ENCODE measurements at regions of chr5 and their contacts with region 1.

Region 1: GRCh38 chr5:88140856-88141752 is 127.5 kb downstream of the TMEM161B start:
- DNase-seq: peak; percentile 97 to 98
- H3K4me3 ChIP-seq: peak overlapping the region; percentile 52
- H3K4me3 Mint-ChIP-seq: no peak overlapping the region
- H3K27ac Mint-ChIP-seq: no peak overlapping the region
- H3K4me1 ChIP-seq: no peaks in the 10 kb centered on the region; the same call in 1 of the 2 replicates
- H3K4me1 Mint-ChIP-seq: no peaks in the 10 kb centered on the region
- H3K27me3 ChIP-seq: no peaks in the 10 kb centered on the region
- H3K27me3 Mint-ChIP-seq: peaks cover 2% of the 10 kb centered on the region
- CTCF ChIP-seq: peak; percentile 69 to 84

Region 2: GRCh38 chr5:87916320-87916719 is 224.8 kb before region 1 on chr5:
- CTCF ChIA-PET with region 1: no interaction called
- POLR2A ChIA-PET with region 1: no interaction called
- intact Hi-C with region 1: no loop called
- DNase-seq: no peak
- H3K4me3 ChIP-seq: no peak overlapping the region
- H3K4me3 Mint-ChIP-seq: no peak overlapping the region
- H3K27ac Mint-ChIP-seq: no peak overlapping the region
- H3K4me1 ChIP-seq: no peaks in the 10 kb centered on the region
- H3K4me1 Mint-ChIP-seq: no peaks in the 10 kb centered on the region
- H3K27me3 ChIP-seq: no peaks in the 10 kb centered on the region
- H3K27me3 Mint-ChIP-seq: no peaks in the 10 kb centered on the region
- CTCF ChIP-seq: no peak

Region 3: DNA sequence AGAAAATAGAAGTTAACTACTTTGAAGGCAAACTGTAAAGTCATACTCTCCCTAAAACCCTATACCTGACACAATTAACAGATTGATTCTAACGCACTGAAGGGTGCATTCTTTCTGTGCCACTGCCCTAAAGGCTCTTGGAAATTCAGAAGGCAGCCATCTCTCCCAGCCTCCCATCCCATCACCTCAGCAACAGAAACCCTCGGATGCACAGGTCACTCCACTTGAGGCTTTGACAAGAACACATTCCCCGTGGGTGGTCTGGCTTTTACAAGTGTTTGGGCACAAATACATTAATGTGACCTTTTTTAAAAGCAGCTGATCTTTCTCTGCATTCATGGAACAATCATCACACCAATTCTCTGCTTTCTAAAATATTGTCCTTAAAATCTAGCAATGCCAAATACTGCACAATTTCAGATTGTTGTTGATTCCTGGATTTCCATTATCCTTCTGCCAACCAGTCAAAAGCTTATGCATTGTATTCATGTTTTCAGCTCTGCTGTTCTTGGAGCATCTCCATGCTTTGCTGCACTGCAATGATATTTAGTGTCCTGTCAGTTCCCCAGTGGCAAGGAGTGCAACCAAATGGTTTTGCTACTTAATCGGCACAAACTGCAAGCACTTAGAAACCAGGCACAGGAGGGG is 48.0 kb before region 1 on chr5:
- CTCF ChIA-PET with region 1: interaction called, 4 read pairs
- POLR2A ChIA-PET with region 1: no interaction called
- intact Hi-C with region 1: loop called (anchors 1 kb)
- DNase-seq: no peak
- H3K4me3 ChIP-seq: no peak overlapping the region
- H3K4me3 Mint-ChIP-seq: no peak overlapping the region
- H3K27ac Mint-ChIP-seq: no peak overlapping the region
- H3K4me1 ChIP-seq: peaks cover 7% of the 10 kb centered on the region; the same call in 1 of the 2 replicates
- H3K4me1 Mint-ChIP-seq: no peaks in the 10 kb centered on the region
- H3K27me3 ChIP-seq: no peaks in the 10 kb centered on the region
- H3K27me3 Mint-ChIP-seq: peaks cover 5% of the 10 kb centered on the region
- CTCF ChIP-seq: no peak

Region 4: GRCh38 chr5:88172847-88173758 is 32.0 kb after region 1 on chr5:
- CTCF ChIA-PET with region 1: no interaction called
- POLR2A ChIA-PET with region 1: no interaction called
- intact Hi-C with region 1: no loop called
- DNase-seq: peak in 1 of 2 experiments; percentile 30
- H3K4me3 ChIP-seq: no peak overlapping the region
- H3K4me3 Mint-ChIP-seq: no peak overlapping the region
- H3K27ac Mint-ChIP-seq: no peak overlapping the region
- H3K4me1 ChIP-seq: no peaks in the 10 kb centered on the region
- H3K4me1 Mint-ChIP-seq: no peaks in the 10 kb centered on the region
- H3K27me3 ChIP-seq: no peaks in the 10 kb centered on the region
- H3K27me3 Mint-ChIP-seq: peaks cover 5% of the 10 kb centered on the region
- CTCF ChIP-seq: no peak

Region 5: DNA sequence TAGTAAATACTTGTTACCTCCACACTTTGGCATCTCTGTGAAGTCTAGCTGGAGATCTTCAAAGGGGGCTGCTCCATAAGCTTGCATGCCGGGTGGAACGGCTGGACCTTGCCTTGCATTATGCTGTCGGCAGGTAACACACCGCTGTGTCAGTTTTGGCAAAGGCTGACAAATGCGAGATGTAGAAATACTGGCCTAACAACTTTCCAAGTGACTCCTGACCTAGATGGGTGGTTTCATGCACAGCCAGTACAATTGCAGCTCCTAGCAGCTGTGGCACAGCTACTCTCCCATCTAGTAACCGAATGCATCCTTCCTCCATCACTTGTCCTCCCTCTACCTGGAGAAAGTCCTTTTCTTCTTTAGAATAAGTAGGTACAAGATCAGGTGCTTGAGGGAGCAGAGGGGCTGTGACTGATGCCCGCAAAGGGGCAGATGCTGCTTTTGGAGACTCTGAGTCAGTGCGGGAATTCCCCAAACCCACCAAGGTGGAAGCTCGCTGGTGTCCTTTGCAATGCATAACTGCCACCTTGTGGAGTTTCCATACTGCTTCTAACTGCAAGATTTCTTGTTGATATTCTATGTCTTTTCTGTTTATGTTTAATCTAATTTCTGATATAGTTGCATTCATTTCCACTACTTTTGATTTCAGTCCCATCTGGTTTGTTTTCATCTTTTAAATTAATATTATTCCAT is 49.2 kb after region 1 on chr5:
- CTCF ChIA-PET with region 1: interaction called, 4 read pairs
- POLR2A ChIA-PET with region 1: no interaction called
- intact Hi-C with region 1: loop called (anchors 5 kb)
- DNase-seq: peak in 1 of 2 experiments; percentile 29
- H3K4me3 ChIP-seq: no peak overlapping the region
- H3K4me3 Mint-ChIP-seq: no peak overlapping the region
- H3K27ac Mint-ChIP-seq: no peak overlapping the region
- H3K4me1 ChIP-seq: no peaks in the 10 kb centered on the region
- H3K4me1 Mint-ChIP-seq: no peaks in the 10 kb centered on the region
- H3K27me3 ChIP-seq: no peaks in the 10 kb centered on the region
- H3K27me3 Mint-ChIP-seq: no peaks in the 10 kb centered on the region
- CTCF ChIP-seq: no peak

Region 6: GRCh38 chr5:88236866-88237642 is 96.0 kb after region 1 on chr5:
- CTCF ChIA-PET with region 1: no interaction called
- POLR2A ChIA-PET with region 1: no interaction called
- intact Hi-C with region 1: no loop called
- DNase-seq: no peak
- H3K4me3 ChIP-seq: no peak overlapping the region
- H3K4me3 Mint-ChIP-seq: no peak overlapping the region
- H3K27ac Mint-ChIP-seq: no peak overlapping the region
- H3K4me1 ChIP-seq: no peaks in the 10 kb centered on the region
- H3K4me1 Mint-ChIP-seq: no peaks in the 10 kb centered on the region
- H3K27me3 ChIP-seq: no peaks in the 10 kb centered on the region
- H3K27me3 Mint-ChIP-seq: no peaks in the 10 kb centered on the region
- CTCF ChIP-seq: no peak

Region 7: DNA sequence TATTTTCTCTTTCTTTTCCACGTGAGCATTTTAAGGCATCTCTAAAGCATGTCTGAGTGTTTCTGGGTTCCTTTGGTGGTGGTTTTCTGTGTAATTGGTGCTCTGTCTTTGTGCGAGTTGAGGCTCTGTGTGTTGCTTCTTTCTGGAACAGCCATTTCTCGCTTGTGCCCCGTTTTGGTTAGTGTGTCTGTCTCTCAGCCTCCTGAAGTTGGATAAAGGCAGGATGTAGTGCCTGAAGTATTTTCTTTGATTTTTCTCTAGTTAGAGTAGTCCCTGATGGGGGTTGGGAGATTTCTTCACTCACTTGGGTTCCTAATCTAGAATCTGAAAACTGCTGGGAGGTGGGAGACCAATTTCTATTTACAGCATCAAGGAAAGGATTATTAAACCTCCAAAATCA is 257.2 kb after region 1 on chr5:
- CTCF ChIA-PET with region 1: no interaction called
- POLR2A ChIA-PET with region 1: no interaction called
- intact Hi-C with region 1: loop called (anchors 5 kb)
- DNase-seq: no peak
- H3K4me3 ChIP-seq: no peak overlapping the region
- H3K4me3 Mint-ChIP-seq: no peak overlapping the region
- H3K27ac Mint-ChIP-seq: no peak overlapping the region
- H3K4me1 ChIP-seq: no peaks in the 10 kb centered on the region
- H3K4me1 Mint-ChIP-seq: no peaks in the 10 kb centered on the region
- H3K27me3 ChIP-seq: no peaks in the 10 kb centered on the region; the same call in none of the 2 replicates
- H3K27me3 Mint-ChIP-seq: peaks cover 37% of the 10 kb centered on the region
- CTCF ChIP-seq: no peak

Region 8: GRCh38 chr5:88515876-88516819 is 375.0 kb after region 1 on chr5:
- CTCF ChIA-PET with region 1: no interaction called
- POLR2A ChIA-PET with region 1: no interaction called
- intact Hi-C with region 1: no loop called
- DNase-seq: no peak
- H3K4me3 ChIP-seq: no peak overlapping the region
- H3K4me3 Mint-ChIP-seq: no peak overlapping the region
- H3K27ac Mint-ChIP-seq: no peak overlapping the region
- H3K4me1 ChIP-seq: no peaks in the 10 kb centered on the region
- H3K4me1 Mint-ChIP-seq: peaks cover 10% of the 10 kb centered on the region
- H3K27me3 ChIP-seq: no peaks in the 10 kb centered on the region
- H3K27me3 Mint-ChIP-seq: peaks cover 3% of the 10 kb centered on the region
- CTCF ChIP-seq: no peak

Region 9: DNA sequence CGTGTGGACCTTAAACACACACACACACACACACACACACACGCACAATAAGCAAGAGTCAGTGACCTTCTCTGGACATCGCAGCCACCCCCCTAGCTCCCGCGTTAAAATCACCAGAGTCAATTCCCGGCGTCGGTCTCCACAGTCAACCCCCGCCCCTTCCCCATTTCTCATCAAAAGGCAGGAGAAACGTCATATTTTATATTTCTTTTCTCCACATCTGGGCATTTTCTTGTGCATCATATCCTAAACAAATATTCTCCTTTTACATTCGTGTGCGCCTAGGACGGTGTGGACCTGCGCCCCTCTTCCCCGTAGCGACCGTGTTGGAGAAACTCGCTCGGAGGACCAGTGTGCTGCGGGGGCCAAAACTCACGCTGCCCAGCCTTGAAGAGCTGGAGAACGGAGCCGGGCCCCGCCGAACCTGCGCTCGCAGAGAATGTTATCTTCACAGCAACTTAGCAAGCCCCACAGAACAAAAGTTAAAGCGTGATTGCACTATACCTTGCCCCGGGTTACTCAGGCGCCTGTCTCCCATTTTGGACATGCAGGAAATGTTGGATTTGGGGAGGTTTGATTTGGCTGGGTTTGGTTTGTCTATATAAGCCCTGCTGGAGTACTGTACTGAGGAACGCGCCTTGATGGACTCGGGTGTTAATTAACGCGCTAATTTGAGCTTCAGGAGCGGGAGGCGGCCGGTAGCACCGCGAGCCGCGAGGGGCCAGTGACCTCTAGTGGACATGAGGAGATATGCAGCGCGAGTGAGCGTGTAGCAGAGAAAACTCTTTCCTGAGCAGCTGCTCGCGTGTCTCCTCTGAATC is 549.5 kb after region 1 on chr5:
- CTCF ChIA-PET with region 1: no interaction called
- POLR2A ChIA-PET with region 1: interaction called, 4 read pairs
- intact Hi-C with region 1: loop called (anchors 2 kb)
- DNase-seq: peak; percentile 50 to 63
- H3K4me3 ChIP-seq: no peak overlapping the region
- H3K4me3 Mint-ChIP-seq: peak overlapping the region; percentile 67
- H3K27ac Mint-ChIP-seq: no peak overlapping the region
- H3K4me1 ChIP-seq: no peaks in the 10 kb centered on the region
- H3K4me1 Mint-ChIP-seq: peaks cover 8% of the 10 kb centered on the region
- H3K27me3 ChIP-seq: peaks cover 10% of the 10 kb centered on the region
- H3K27me3 Mint-ChIP-seq: peaks cover 48% of the 10 kb centered on the region
- CTCF ChIP-seq: peak; percentile 93 to 95

Measured in Caco-2 (cell line).